ENCODE measurements at regions of chr13 and their contacts with region 1.

Region 1: GRCh38 chr13:50810998-50811397 is 32.5 kb downstream of the DLEU7 start:
- DNase-seq: peak; percentile 85
- H3K4me3 ChIP-seq: peak overlapping the region; percentile 50
- H3K27ac ChIP-seq: peak overlapping the region; percentile 70
- H3K4me1 ChIP-seq: peaks cover 29% of the 10 kb centered on the region
- CTCF ChIP-seq: no peak

Region 2: GRCh38 chr13:50829226-50829625 is 18.2 kb after region 1 on chr13:
- CTCF ChIA-PET with region 1: no interaction called
- POLR2A ChIA-PET with region 1: interaction called, 10 read pairs
- intact Hi-C with region 1: no loop called
- DNase-seq: no peak
- H3K4me3 ChIP-seq: no peak overlapping the region
- H3K27ac ChIP-seq: no peak overlapping the region
- H3K4me1 ChIP-seq: no peaks in the 10 kb centered on the region
- CTCF ChIP-seq: no peak